ENCODE measurements at regions of chr18 and their contacts with region 1.

Region 1: GRCh38 chr18:70659036-70659925 is 370.4 kb downstream of the SOCS6 start:
- DNase-seq: peak; percentile 90 to 95 (median 92)
- H3K4me3 ChIP-seq: peak overlapping the region in 2 of 7 experiments; percentile 28 to 51
- H3K27ac ChIP-seq: peak overlapping the region in 1 of 2 experiments; percentile 35
- H3K4me1 ChIP-seq: peaks cover 14 to 50% (median 25%) of the 10 kb centered on the region in 4 experiments
- H3K27me3 ChIP-seq: no peaks in the 10 kb centered on the region

Region 2: DNA sequence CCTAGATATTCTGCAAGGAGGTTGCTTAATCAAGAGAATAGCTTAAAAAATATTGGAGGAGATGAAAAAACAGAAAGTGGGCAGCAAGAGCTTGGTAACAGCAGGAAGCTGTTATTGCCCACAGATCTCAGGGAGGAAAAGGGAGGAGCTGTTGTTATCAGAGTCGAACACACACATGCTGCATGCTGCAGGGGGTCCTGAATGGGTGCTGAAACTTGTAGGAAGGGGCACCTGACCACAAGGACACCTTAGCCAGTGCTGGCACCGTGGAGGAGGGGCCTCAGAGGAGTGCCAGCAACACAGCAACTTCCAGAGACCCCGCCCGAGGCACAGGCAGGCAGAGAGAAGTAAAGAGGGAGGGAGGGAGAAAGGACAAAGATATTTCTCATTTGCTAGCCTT is 37.6 kb before region 1 on chr18:
- CTCF ChIA-PET with region 1: interaction called, 15 read pairs
- POLR2A ChIA-PET with region 1: no interaction called
- DNase-seq: peak; percentile 91 to 98 (median 96)
- H3K4me3 ChIP-seq: peak overlapping the region in 5 of 7 experiments; percentile 7 to 63 (median 44)
- H3K27ac ChIP-seq: peak overlapping the region in 1 of 2 experiments; percentile 71
- H3K4me1 ChIP-seq: peaks cover 18 to 90% (median 58%) of the 10 kb centered on the region in 4 experiments
- H3K27me3 ChIP-seq: no peaks in the 10 kb centered on the region

Region 3: DNA sequence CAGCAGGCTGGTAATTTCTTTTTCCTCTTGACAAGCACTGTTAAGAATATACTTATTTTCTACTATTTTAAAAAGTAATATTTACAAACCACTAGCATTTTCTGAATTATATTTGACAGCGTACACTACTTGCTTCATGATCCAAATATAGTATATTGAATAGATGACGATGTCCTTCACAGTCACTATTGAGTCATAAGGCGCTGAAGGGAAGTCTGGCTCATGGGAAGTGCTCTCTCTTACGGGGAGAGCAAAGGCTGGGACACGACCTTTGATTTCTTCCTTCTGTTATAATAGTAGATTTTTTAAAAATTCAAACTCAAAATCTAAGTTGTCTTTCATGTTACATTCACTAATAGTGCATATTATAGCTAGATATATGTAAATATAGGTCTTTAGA is 13.3 kb before region 1 on chr18:
- CTCF ChIA-PET with region 1: interaction called, 10 read pairs
- POLR2A ChIA-PET with region 1: no interaction called
- DNase-seq: no peak
- H3K4me3 ChIP-seq: no peak overlapping the region
- H3K27ac ChIP-seq: no peak overlapping the region
- H3K4me1 ChIP-seq: peaks cover 0 to 4% (median 0%) of the 10 kb centered on the region in 4 experiments
- H3K27me3 ChIP-seq: no peaks in the 10 kb centered on the region

Region 4: GRCh38 chr18:70848329-70848728 is 189.0 kb after region 1 on chr18:
- CTCF ChIA-PET with region 1: no interaction called
- POLR2A ChIA-PET with region 1: no interaction called
- DNase-seq: no peak
- H3K4me3 ChIP-seq: no peak overlapping the region
- H3K27ac ChIP-seq: no peak overlapping the region
- H3K4me1 ChIP-seq: no peaks in the 10 kb centered on the region
- H3K27me3 ChIP-seq: no peaks in the 10 kb centered on the region

Measured in common myeloid progenitor, CD34-positive (primary cell).